Activated B cell treated with CpG ODN at 0.5 μM for 24 hours (primary cell): ENCODE measurements at regions of chr17 and their contacts with region 1.

Region 1: DNA sequence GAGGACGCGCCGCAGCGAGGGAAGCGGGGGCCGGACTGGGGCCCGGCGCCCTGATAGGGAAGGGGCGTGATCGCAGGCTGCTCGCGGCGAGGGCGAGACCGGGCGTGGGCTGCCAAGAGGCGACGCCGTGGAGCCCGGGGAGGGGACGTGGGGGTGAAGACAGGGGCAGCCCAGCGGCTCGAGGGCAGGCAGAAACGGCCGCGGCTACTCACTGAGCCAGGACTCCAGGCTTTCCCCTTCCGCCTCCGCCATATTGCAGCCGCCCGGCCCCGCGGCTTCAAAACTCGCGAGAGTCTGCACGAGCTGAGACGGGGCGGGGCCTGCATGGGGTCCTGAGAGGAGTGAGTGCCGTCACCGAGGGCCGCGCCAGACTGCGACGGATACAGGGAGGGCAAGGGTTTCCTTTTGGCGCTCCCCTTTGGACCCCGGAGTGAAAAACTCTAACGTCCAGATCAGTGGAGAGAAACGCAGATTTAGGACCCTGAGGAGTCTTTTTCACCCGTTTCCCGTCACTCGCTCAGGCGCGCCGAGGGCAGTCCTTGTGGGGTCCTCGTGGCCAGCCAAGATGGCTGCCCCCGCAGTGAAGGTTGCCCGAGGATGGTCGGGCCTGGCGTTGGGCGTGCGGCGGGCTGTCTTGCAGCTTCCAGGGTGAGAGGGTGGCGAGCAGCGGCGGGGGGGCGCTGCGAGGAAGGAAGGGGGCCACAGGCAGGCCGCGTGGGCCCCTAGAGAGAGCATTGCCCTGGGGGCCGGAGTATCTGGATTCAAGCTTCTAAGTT is at the starts of genes GGA3 and MRPS7:
- DNase-seq: peak; percentile 93
- ATAC-seq: peak; percentile 97
- H3K4me3 Mint-ChIP-seq: peak within 1 kb of the TSS; percentile 99
- H3K27ac Mint-ChIP-seq: peak within 1 kb of the TSS; percentile 99
- H3K4me1 Mint-ChIP-seq: peaks cover 56% of the 10 kb centered on the region
- H3K27me3 Mint-ChIP-seq: no peaks in the 10 kb centered on the region
- CTCF ChIP-seq: no peak
- total RNA-seq, gene GGA3: 116 and 119 TPM in 2 replicates
- total RNA-seq, gene MRPS7: 67.6 and 71.3 TPM in 2 replicates

Region 2: GRCh38 chr17:75116737-75117136 is 144.8 kb before region 1 on chr17:
- CTCF ChIA-PET with region 1: interaction called, 5 read pairs
- POLR2A ChIA-PET with region 1: interaction called, 11 read pairs
- intact Hi-C with region 1: loop called (anchors 10 kb)
- DNase-seq: no peak
- ATAC-seq: no peak
- H3K4me3 Mint-ChIP-seq: no peak overlapping the region
- H3K27ac Mint-ChIP-seq: no peak overlapping the region
- H3K4me1 Mint-ChIP-seq: peaks cover 64% of the 10 kb centered on the region
- H3K27me3 Mint-ChIP-seq: no peaks in the 10 kb centered on the region
- CTCF ChIP-seq: no peak

Region 3: GRCh38 chr17:75238684-75239191 is 22.8 kb before region 1 on chr17:
- CTCF ChIA-PET with region 1: interaction called, 10 read pairs
- POLR2A ChIA-PET with region 1: interaction called, 26 read pairs
- intact Hi-C with region 1: no loop called
- DNase-seq: peak; percentile 53
- ATAC-seq: peak; percentile 72
- H3K4me3 Mint-ChIP-seq: peak overlapping the region; percentile 57
- H3K27ac Mint-ChIP-seq: peak overlapping the region; percentile 83
- H3K4me1 Mint-ChIP-seq: peaks cover 35% of the 10 kb centered on the region
- H3K27me3 Mint-ChIP-seq: no peaks in the 10 kb centered on the region
- CTCF ChIP-seq: no peak

Region 4: DNA sequence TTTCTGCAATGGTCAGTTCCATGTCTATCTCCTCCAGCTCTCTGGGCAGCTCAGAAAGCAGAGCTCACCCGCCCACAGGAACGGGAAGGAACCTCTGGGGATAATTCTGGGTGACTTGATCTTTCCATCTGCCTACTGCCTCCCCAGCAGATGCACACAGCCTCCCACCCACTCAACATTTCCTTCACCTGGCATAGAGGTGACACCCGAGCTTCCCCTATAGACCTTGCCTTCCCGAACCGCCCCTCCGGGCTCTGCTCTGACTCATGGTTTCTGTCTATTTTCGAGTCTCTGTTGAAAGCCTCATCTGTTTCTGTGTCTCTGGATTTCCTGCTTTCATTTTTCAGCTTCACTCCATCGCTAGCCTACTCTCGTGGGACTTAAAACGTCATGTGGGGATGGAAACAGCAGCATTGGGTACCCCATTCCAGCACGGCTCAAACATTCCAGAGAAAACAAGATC is 11.5 kb before region 1 on chr17:
- CTCF ChIA-PET with region 1: interaction called, 8 read pairs
- POLR2A ChIA-PET with region 1: interaction called, 54 read pairs
- intact Hi-C with region 1: loop called (anchors 1 kb)
- DNase-seq: peak; percentile 46
- ATAC-seq: peak; percentile 88
- H3K4me3 Mint-ChIP-seq: peak overlapping the region; percentile 76
- H3K27ac Mint-ChIP-seq: peak overlapping the region; percentile 87
- H3K4me1 Mint-ChIP-seq: peaks cover 65% of the 10 kb centered on the region
- H3K27me3 Mint-ChIP-seq: no peaks in the 10 kb centered on the region
- CTCF ChIP-seq: no peak

Region 5: DNA sequence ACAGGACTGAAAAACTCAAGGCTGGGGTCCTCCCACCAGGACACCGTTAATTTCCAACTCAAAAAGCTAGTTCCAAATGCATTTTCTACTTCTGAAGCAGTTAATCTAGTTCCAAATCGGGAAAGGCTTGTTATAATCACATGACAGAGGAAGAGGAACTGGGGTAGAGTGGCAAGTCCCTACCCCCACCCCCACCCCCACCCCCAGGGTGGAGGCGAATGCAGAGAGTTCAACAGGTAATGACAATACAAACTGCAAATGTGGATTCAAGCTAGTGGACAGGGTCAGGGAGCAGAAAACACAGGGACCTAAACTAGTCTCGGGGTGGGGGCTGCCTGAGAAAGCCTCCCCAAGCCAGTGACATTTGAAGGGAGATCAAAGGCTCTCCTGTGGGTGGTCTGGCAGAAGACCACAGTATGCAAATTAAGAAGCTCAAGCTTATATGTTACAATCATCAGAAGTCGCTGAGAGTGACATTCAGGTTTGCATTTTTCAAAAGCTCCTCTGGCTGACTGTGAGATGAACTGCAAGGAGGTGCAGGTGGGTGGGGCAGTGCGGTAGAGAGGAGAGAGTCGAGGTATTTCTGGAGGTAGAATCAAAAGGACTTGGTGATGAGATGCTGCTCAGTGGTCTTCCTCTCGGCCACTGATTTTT is 84.1 kb after region 1 on chr17:
- CTCF ChIA-PET with region 1: no interaction called
- POLR2A ChIA-PET with region 1: interaction called, 11 read pairs
- intact Hi-C with region 1: no loop called
- DNase-seq: peak; percentile 63
- ATAC-seq: peak; percentile 83
- H3K4me3 Mint-ChIP-seq: peak overlapping the region; percentile 89
- H3K27ac Mint-ChIP-seq: peak overlapping the region; percentile 92
- H3K4me1 Mint-ChIP-seq: peaks cover 97% of the 10 kb centered on the region
- H3K27me3 Mint-ChIP-seq: no peaks in the 10 kb centered on the region
- CTCF ChIP-seq: no peak

Region 6: GRCh38 chr17:75456417-75457046 is 195.0 kb after region 1 on chr17 and contains the start of gene TMEM94:
- CTCF ChIA-PET with region 1: no interaction called
- POLR2A ChIA-PET with region 1: interaction called, 10 read pairs
- intact Hi-C with region 1: no loop called
- DNase-seq: peak; percentile 74
- ATAC-seq: peak; percentile 94
- H3K4me3 Mint-ChIP-seq: peak within 1 kb of the TSS; percentile 91
- H3K27ac Mint-ChIP-seq: peak within 1 kb of the TSS; percentile 88
- H3K4me1 Mint-ChIP-seq: peaks cover 41% of the 10 kb centered on the region
- H3K27me3 Mint-ChIP-seq: no peaks in the 10 kb centered on the region
- CTCF ChIP-seq: no peak
- total RNA-seq, gene TMEM94: 80.3 and 86.6 TPM in 2 replicates